Dendritic cell treated with granulocyte-macrophage colony-stimulating factor and Interleukin-4, amounts not matched to agents 40 ng/mL and 50 ng/mL, for 4 days (primary cell): ENCODE measurements at regions of chr10 and their contacts with region 1.

Region 1: GRCh38 chr10:931416-932318 is at the start of gene LARP4B:
- H3K4me3 Mint-ChIP-seq: peak within 1 kb of the TSS; percentile 94
- H3K27ac Mint-ChIP-seq: peak within 1 kb of the TSS; percentile 87
- H3K4me1 Mint-ChIP-seq: peaks cover 45% of the 10 kb centered on the region
- H3K27me3 Mint-ChIP-seq: no peaks in the 10 kb centered on the region

Region 2: GRCh38 chr10:895319-895718 is 36.3 kb before region 1 on chr10:
- intact Hi-C with region 1: no loop called
- H3K4me3 Mint-ChIP-seq: no peak overlapping the region
- H3K27ac Mint-ChIP-seq: no peak overlapping the region
- H3K4me1 Mint-ChIP-seq: peaks cover 16% of the 10 kb centered on the region
- H3K27me3 Mint-ChIP-seq: no peaks in the 10 kb centered on the region

Region 3: GRCh38 chr10:1048732-1049424 is 117.2 kb after region 1 on chr10 and contains the start of gene IDI1:
- intact Hi-C with region 1: loop called (anchors 2 kb)
- H3K4me3 Mint-ChIP-seq: peak within 1 kb of the TSS; percentile 89
- H3K27ac Mint-ChIP-seq: peak within 1 kb of the TSS; percentile 99
- H3K4me1 Mint-ChIP-seq: peaks cover 58% of the 10 kb centered on the region
- H3K27me3 Mint-ChIP-seq: no peaks in the 10 kb centered on the region

Region 4: DNA sequence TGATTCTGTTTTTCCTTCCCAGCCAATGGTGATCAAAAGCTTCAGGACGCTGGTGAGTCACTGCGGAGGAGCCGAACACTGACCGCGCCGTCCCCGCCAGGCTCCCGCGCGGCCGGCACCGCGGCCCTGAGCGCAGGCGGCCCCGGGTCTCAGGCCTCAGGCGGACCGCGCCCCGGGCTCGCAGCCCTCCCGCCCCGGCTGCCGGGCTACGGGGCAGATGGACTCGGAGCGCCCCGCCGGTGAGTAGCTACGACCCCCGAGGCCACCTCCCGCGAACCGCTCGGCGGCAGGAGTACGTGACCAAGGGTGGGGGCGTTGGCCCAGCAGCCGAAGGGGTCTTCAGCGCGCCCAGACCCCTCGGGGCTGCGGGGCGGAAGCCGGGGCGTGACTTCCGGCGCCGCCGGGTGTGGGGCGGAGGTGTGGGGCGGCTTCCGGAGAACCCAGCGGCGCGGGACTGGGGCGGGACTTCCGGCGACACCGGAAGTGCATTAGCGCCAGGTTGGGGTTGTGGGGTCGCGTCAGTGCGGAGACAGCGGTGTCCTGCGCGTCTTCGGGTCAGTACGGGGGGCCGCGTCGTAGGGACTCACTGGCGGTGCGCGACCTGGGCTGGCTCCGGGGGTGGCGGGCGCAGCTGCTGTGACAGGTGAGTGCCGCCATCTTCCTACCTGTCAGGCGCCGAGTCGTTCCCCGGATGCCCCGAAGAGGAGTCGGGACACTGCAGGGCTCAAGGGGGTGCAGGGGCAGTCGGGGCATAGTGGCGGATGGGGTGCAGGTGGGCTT is 124.8 kb after region 1 on chr10 and contains the start of gene WDR37:
- intact Hi-C with region 1: loop called (anchors 2 kb)
- H3K4me3 Mint-ChIP-seq: peak within 1 kb of the TSS; percentile 100
- H3K27ac Mint-ChIP-seq: peak within 1 kb of the TSS; percentile 99
- H3K4me1 Mint-ChIP-seq: peaks cover 67% of the 10 kb centered on the region
- H3K27me3 Mint-ChIP-seq: no peaks in the 10 kb centered on the region

Region 5: DNA sequence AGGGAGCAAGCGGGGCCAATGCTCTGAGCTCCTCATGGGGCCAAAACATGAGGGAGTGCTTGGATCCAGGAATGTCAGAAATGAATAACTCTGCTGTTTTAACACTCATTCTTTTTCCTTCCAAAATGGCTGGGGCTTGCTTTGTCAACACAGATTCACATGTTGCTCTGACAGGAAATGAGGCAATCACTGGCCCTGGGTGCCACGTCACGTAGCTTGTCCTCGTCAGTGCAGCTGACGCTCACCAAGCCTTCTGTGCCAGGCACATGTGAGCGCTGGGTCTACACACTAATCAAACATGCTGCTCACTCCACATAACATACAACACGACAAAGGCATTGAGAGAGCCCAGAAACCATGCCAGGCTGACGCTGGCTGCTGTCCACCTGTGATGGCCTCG is 323.5 kb after region 1 on chr10:
- intact Hi-C with region 1: no loop called
- H3K4me3 Mint-ChIP-seq: no peak overlapping the region
- H3K27ac Mint-ChIP-seq: no peak overlapping the region
- H3K4me1 Mint-ChIP-seq: no peaks in the 10 kb centered on the region
- H3K27me3 Mint-ChIP-seq: peaks cover 44% of the 10 kb centered on the region

Region 6: DNA sequence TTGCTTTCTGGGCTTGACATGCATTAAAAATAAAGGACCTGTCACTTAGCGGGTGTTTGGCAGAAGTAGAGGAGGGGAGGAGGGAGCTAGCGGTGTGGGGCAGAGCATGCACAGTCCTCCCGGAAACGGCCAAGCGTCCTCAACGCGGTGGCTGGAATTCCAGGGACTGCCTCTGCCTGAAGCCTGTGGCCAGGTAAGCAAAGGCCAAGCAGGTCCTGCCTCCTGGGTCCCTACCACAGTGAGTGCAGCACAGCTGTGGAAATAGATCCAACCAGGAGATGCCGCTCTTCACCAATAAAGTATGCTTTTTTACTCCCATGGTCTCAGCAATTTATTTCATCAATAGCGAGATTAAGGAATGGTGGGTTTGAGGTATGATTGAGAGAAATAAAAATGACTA is 447.9 kb after region 1 on chr10:
- intact Hi-C with region 1: no loop called
- H3K4me3 Mint-ChIP-seq: no peak overlapping the region
- H3K27ac Mint-ChIP-seq: no peak overlapping the region
- H3K4me1 Mint-ChIP-seq: no peaks in the 10 kb centered on the region
- H3K27me3 Mint-ChIP-seq: peaks cover 23% of the 10 kb centered on the region